ENCODE measurements at regions of chr11 and their contacts with region 1.

Region 1: DNA sequence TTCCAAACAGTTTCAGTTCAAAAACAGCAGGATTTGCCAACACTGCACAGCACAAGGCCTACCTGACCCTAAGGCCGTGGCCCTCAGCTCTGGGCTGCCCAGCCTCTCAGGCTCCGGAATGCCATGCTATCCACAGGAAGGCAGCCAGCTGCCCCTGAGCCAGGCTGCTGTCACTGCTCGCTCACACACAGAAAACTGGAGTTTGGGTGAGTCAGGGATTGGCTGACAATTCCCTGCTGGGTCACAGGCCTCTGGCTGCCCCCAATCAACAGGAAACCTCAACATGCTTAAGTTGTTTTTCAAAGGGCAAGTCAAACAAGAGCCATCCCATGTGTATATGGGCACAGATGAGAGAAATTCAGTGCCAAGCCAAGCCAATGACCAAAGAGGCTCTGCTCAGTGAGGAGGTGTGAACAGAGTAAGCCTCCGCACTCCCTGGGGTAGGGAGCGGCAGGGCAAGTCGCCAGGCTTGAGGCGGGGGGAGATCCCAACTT is 50.2 kb downstream of the RPL27A start:
- DNase-seq: peak; percentile 82 to 89
- ATAC-seq: peak; percentile 94 to 96 (median 96)
- H3K4me3 ChIP-seq: no peak overlapping the region
- H3K27ac ChIP-seq: peak overlapping the region; percentile 77
- H3K4me1 ChIP-seq: peaks cover 21% of the 10 kb centered on the region
- H3K27me3 ChIP-seq: no peaks in the 10 kb centered on the region
- CTCF ChIP-seq: no peak

Region 2: DNA sequence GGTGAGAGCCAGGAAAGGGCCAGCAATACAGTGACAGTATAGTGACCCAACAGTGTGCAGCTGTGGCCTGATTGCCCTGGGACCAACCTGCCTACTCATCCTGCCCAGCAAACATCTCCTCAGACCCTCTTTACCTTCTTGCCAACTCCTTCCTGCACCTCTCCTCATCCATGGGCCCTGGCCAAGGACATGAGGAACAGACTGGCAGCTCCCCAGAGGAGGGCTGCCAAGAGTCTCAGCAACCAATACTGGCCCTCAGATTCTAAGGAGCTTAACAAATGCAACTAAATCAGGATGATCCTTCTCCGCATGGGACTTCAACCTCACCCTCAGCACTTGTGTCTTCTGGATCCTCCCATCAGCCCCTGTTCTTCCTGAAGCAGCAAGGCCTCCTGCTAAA is 26.8 kb after region 1 on chr11:
- intact Hi-C with region 1: loop called in 1 of 2 experiments (anchors 1 kb)
- DNase-seq: peak; percentile 49 to 70
- ATAC-seq: peak; percentile 48 to 83 (median 62)
- H3K4me3 ChIP-seq: no peak overlapping the region
- H3K27ac ChIP-seq: peak overlapping the region; percentile 74
- H3K4me1 ChIP-seq: peaks cover 54% of the 10 kb centered on the region
- H3K27me3 ChIP-seq: no peaks in the 10 kb centered on the region
- CTCF ChIP-seq: no peak

Region 3: GRCh38 chr11:8768625-8769333 is 36.0 kb after region 1 on chr11:
- intact Hi-C with region 1: loop called in 1 of 2 experiments (anchors 5 kb)
- DNase-seq: peak in 1 of 2 donors; percentile 34
- ATAC-seq: peak; percentile 66 to 79 (median 78)
- H3K4me3 ChIP-seq: no peak overlapping the region
- H3K27ac ChIP-seq: peak overlapping the region; percentile 60
- H3K4me1 ChIP-seq: peaks cover 30% of the 10 kb centered on the region
- H3K27me3 ChIP-seq: no peaks in the 10 kb centered on the region
- CTCF ChIP-seq: peak; percentile 14

Region 4: GRCh38 chr11:9265211-9266131 is 532.7 kb after region 1 on chr11 and contains the start of gene DENND5A:
- intact Hi-C with region 1: no loop called
- DNase-seq: peak; percentile 86 to 92
- ATAC-seq: peak; percentile 87 to 94 (median 93)
- H3K4me3 ChIP-seq: peak within 1 kb of the TSS; percentile 87
- H3K27ac ChIP-seq: peak within 1 kb of the TSS; percentile 87
- H3K4me1 ChIP-seq: peaks cover 12% of the 10 kb centered on the region
- H3K27me3 ChIP-seq: no peaks in the 10 kb centered on the region
- CTCF ChIP-seq: no peak
- total RNA-seq, gene DENND5A: 27.2 to 45.1 (median 32.3) TPM

Measured in psoas muscle (tissue), 8 donors.